ENCODE measurements at regions of chr5 and their contacts with region 1.

Region 1: DNA sequence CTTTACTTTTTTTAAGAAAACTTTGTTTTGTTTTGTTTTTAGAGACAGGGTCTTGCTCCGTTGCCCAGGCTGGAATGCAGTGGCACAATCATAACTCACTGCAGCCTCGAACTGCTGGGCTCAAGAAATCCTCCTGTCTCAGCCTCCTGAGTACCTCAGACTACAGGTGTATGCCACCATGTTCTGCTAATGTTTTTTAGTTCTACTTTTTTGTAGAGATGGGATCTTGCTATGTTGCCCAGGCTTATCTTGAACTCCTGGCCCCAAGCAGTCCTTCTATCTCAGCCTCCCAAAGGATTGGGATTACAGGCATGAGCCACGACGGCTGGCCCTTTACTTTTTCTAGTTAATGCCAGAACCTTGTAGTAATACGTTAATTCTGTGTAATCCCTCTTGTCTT is 36.0 kb downstream of the IPO11 start:
- DNase-seq: no peak
- H3K4me3 ChIP-seq: no peak overlapping the region
- H3K4me3 Mint-ChIP-seq: no peak overlapping the region
- H3K27ac ChIP-seq: no peak overlapping the region
- H3K27ac Mint-ChIP-seq: no peak overlapping the region
- H3K4me1 ChIP-seq: no peaks in the 10 kb centered on the region
- H3K4me1 Mint-ChIP-seq: peaks cover 0 to 3% (median 1%) of the 10 kb centered on the region in 4 donors
- H3K27me3 ChIP-seq: no peaks in the 10 kb centered on the region
- H3K27me3 Mint-ChIP-seq: no peaks in the 10 kb centered on the region

Region 2: GRCh38 chr5:62268234-62268633 is 180.3 kb before region 1 on chr5:
- CTCF ChIA-PET with region 1: no interaction called
- POLR2A ChIA-PET with region 1: no interaction called
- intact Hi-C with region 1: no loop called
- DNase-seq: no peak
- H3K4me3 ChIP-seq: no peak overlapping the region
- H3K4me3 Mint-ChIP-seq: peak overlapping the region in 2 of 8 donors; percentile 11 to 42
- H3K27ac ChIP-seq: no peak overlapping the region
- H3K27ac Mint-ChIP-seq: peak overlapping the region in 4 of 7 donors; percentile 5 to 84 (median 40)
- H3K4me1 ChIP-seq: peaks cover 11% of the 10 kb centered on the region
- H3K4me1 Mint-ChIP-seq: peaks cover 7 to 12% (median 10%) of the 10 kb centered on the region in 4 donors
- H3K27me3 ChIP-seq: no peaks in the 10 kb centered on the region
- H3K27me3 Mint-ChIP-seq: no peaks in the 10 kb centered on the region

Region 3: GRCh38 chr5:62376064-62376463 is 72.5 kb before region 1 on chr5:
- CTCF ChIA-PET with region 1: no interaction called
- POLR2A ChIA-PET with region 1: no interaction called
- intact Hi-C with region 1: no loop called
- DNase-seq: no peak
- H3K4me3 ChIP-seq: no peak overlapping the region
- H3K4me3 Mint-ChIP-seq: no peak overlapping the region
- H3K27ac ChIP-seq: no peak overlapping the region
- H3K27ac Mint-ChIP-seq: peak overlapping the region in 2 of 7 donors; percentile 35 to 75
- H3K4me1 ChIP-seq: no peaks in the 10 kb centered on the region
- H3K4me1 Mint-ChIP-seq: peaks cover 0 to 2% (median 0%) of the 10 kb centered on the region in 4 donors
- H3K27me3 ChIP-seq: no peaks in the 10 kb centered on the region
- H3K27me3 Mint-ChIP-seq: no peaks in the 10 kb centered on the region

Region 4: GRCh38 chr5:62431735-62432620 is 16.6 kb before region 1 on chr5:
- CTCF ChIA-PET with region 1: interaction called, 16 read pairs
- POLR2A ChIA-PET with region 1: no interaction called
- intact Hi-C with region 1: no loop called
- DNase-seq: no peak
- H3K4me3 ChIP-seq: no peak overlapping the region
- H3K4me3 Mint-ChIP-seq: no peak overlapping the region
- H3K27ac ChIP-seq: no peak overlapping the region
- H3K27ac Mint-ChIP-seq: peak overlapping the region in 3 of 7 donors; percentile 10 to 58 (median 14)
- H3K4me1 ChIP-seq: peaks cover 10% of the 10 kb centered on the region
- H3K4me1 Mint-ChIP-seq: peaks cover 15 to 29% (median 27%) of the 10 kb centered on the region in 4 donors
- H3K27me3 ChIP-seq: no peaks in the 10 kb centered on the region
- H3K27me3 Mint-ChIP-seq: no peaks in the 10 kb centered on the region

Region 5: GRCh38 chr5:62779010-62779422 is 330.5 kb after region 1 on chr5:
- CTCF ChIA-PET with region 1: interaction called, 5 read pairs
- POLR2A ChIA-PET with region 1: no interaction called
- intact Hi-C with region 1: loop called (anchors 5 kb)
- DNase-seq: peak in 4 of 5 donors; percentile 23 to 32 (median 28)
- H3K4me3 ChIP-seq: no peak overlapping the region
- H3K4me3 Mint-ChIP-seq: peak overlapping the region in 2 of 8 donors; percentile 25 to 41
- H3K27ac ChIP-seq: no peak overlapping the region
- H3K27ac Mint-ChIP-seq: no peak overlapping the region
- H3K4me1 ChIP-seq: no peaks in the 10 kb centered on the region
- H3K4me1 Mint-ChIP-seq: no peaks in the 10 kb centered on the region
- H3K27me3 ChIP-seq: no peaks in the 10 kb centered on the region
- H3K27me3 Mint-ChIP-seq: no peaks in the 10 kb centered on the region

Measured in CD4-positive, alpha-beta memory T cell (primary cell).